ENCODE measurements at regions of chr14 and their contacts with region 1.

Region 1: GRCh38 chr14:102917469-102918211 is 4.8 kb upstream of the AMN start:
- DNase-seq: peak; percentile 79
- ATAC-seq: peak; percentile 28
- H3K4me3 ChIP-seq: peak overlapping the region in 1 of 5 experiments; percentile 16
- H3K4me3 Mint-ChIP-seq: peak overlapping the region; percentile 33
- H3K27ac ChIP-seq: peak overlapping the region; percentile 55 to 68
- H3K27ac Mint-ChIP-seq: peak overlapping the region; percentile 80
- H3K4me1 ChIP-seq: peaks cover 54 to 58% of the 10 kb centered on the region in 2 donors
- H3K4me1 Mint-ChIP-seq: peaks cover 48% of the 10 kb centered on the region
- H3K27me3 ChIP-seq: peaks cover 0 to 4% (median under 1%) of the 10 kb centered on the region in 4 experiments
- H3K27me3 Mint-ChIP-seq: no peaks in the 10 kb centered on the region
- CTCF ChIP-seq: peak; percentile 73

Region 2: DNA sequence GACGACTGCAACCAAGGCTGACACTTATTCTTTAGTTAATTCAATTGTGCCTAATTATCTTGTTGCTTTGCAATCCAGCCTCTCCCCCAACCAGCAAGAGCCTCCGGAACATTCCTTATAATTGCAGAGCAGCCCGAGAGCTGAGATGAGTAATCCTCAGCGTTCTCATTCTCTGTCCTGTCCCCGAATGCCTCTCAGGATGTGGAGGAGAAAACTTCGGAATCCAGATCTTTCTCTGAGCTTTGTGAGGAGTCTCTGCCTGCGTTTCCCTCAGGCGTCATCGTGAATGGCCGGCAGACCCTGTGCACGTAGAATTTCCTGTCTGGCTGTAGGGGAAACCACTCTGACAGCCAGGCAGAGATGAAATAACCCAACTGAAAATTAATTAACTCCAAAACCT is 1516.8 kb before region 1 on chr14:
- CTCF ChIA-PET with region 1: no interaction called
- POLR2A ChIA-PET with region 1: no interaction called
- intact Hi-C with region 1: no loop called
- DNase-seq: no peak
- ATAC-seq: no peak
- H3K4me3 ChIP-seq: no peak overlapping the region
- H3K4me3 Mint-ChIP-seq: no peak overlapping the region
- H3K27ac ChIP-seq: no peak overlapping the region
- H3K27ac Mint-ChIP-seq: no peak overlapping the region
- H3K4me1 ChIP-seq: peaks cover 0 to 14% of the 10 kb centered on the region in 2 donors
- H3K4me1 Mint-ChIP-seq: peaks cover 8% of the 10 kb centered on the region
- H3K27me3 ChIP-seq: peaks cover 0 to 8% (median 0%) of the 10 kb centered on the region in 4 experiments
- H3K27me3 Mint-ChIP-seq: peaks cover 24% of the 10 kb centered on the region
- CTCF ChIP-seq: no peak

Region 3: DNA sequence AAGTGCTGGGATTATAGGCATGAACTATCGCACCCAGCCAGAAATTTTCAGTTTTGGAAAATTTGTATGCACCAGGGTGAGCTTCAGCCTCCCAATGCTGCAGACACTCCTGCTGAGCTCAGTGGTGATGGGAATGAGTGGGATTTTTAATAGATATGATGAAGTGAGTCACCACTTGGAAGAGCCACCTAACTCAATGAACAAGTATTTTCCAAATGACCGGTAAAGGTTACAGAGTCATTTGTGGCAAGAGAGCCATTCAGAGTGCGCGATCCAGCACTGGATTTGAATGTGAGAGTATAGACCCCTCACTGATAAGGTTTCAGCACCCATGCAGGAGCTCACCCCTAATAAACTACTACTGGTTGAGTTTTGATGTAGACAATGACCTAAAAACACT is 1055.5 kb before region 1 on chr14:
- CTCF ChIA-PET with region 1: no interaction called
- POLR2A ChIA-PET with region 1: no interaction called
- intact Hi-C with region 1: no loop called
- DNase-seq: no peak
- ATAC-seq: no peak
- H3K4me3 ChIP-seq: no peak overlapping the region
- H3K4me3 Mint-ChIP-seq: no peak overlapping the region
- H3K27ac ChIP-seq: no peak overlapping the region
- H3K27ac Mint-ChIP-seq: no peak overlapping the region
- H3K4me1 ChIP-seq: peaks cover 0 to 6% of the 10 kb centered on the region in 2 donors
- H3K4me1 Mint-ChIP-seq: peaks cover 10% of the 10 kb centered on the region
- H3K27me3 ChIP-seq: no peaks in the 10 kb centered on the region
- H3K27me3 Mint-ChIP-seq: no peaks in the 10 kb centered on the region
- CTCF ChIP-seq: no peak

Region 4: DNA sequence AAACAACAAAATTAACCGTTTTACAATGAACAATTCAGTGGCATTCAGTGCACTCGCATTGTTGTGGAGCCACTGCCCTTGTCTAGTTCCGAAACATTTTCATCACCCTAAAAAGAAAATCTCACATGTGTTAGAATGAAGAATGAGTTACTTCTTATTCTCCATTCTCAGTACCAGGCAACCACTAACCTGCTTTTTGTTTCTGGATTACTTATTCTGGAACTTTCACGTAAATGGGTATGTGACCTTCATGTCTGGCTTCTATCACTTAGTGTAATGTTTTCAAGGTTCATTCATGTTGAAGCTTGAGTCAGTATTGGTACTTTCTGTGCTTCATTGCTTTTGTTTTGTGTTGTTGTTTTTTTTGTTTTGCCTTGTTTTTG is 309.6 kb before region 1 on chr14:
- CTCF ChIA-PET with region 1: no interaction called
- POLR2A ChIA-PET with region 1: no interaction called
- intact Hi-C with region 1: no loop called
- DNase-seq: no peak
- ATAC-seq: no peak
- H3K4me3 ChIP-seq: no peak overlapping the region
- H3K4me3 Mint-ChIP-seq: peak overlapping the region; percentile 49
- H3K27ac ChIP-seq: no peak overlapping the region
- H3K27ac Mint-ChIP-seq: no peak overlapping the region
- H3K4me1 ChIP-seq: peaks cover 30 to 51% of the 10 kb centered on the region in 2 donors
- H3K4me1 Mint-ChIP-seq: peaks cover 72% of the 10 kb centered on the region
- H3K27me3 ChIP-seq: no peaks in the 10 kb centered on the region
- H3K27me3 Mint-ChIP-seq: no peaks in the 10 kb centered on the region
- CTCF ChIP-seq: no peak

Region 5: GRCh38 chr14:102708494-102708893 is 209.1 kb before region 1 on chr14:
- CTCF ChIA-PET with region 1: no interaction called
- POLR2A ChIA-PET with region 1: no interaction called
- intact Hi-C with region 1: loop called (anchors 5 kb)
- DNase-seq: no peak
- ATAC-seq: no peak
- H3K4me3 ChIP-seq: no peak overlapping the region
- H3K4me3 Mint-ChIP-seq: no peak overlapping the region
- H3K27ac ChIP-seq: no peak overlapping the region
- H3K27ac Mint-ChIP-seq: peak overlapping the region; percentile 72
- H3K4me1 ChIP-seq: no peaks in the 10 kb centered on the region
- H3K4me1 Mint-ChIP-seq: peaks cover 4% of the 10 kb centered on the region
- H3K27me3 ChIP-seq: no peaks in the 10 kb centered on the region
- H3K27me3 Mint-ChIP-seq: no peaks in the 10 kb centered on the region
- CTCF ChIP-seq: no peak

Region 6: GRCh38 chr14:102900631-102901571 is 16.7 kb before region 1 on chr14:
- CTCF ChIA-PET with region 1: interaction called, 12 read pairs
- POLR2A ChIA-PET with region 1: interaction called, 13 read pairs
- intact Hi-C with region 1: loop called (anchors 1 kb)
- DNase-seq: peak; percentile 82
- ATAC-seq: peak; percentile 66
- H3K4me3 ChIP-seq: peak overlapping the region in 4 of 5 experiments; percentile 15 to 45 (median 30)
- H3K4me3 Mint-ChIP-seq: peak overlapping the region; percentile 85
- H3K27ac ChIP-seq: peak overlapping the region; percentile 91 to 93
- H3K27ac Mint-ChIP-seq: peak overlapping the region; percentile 98
- H3K4me1 ChIP-seq: peaks cover 62 to 71% of the 10 kb centered on the region in 2 donors
- H3K4me1 Mint-ChIP-seq: peaks cover 61% of the 10 kb centered on the region
- H3K27me3 ChIP-seq: no peaks in the 10 kb centered on the region
- H3K27me3 Mint-ChIP-seq: no peaks in the 10 kb centered on the region
- CTCF ChIP-seq: no peak

Region 7: GRCh38 chr14:102966681-102967505 is 49.3 kb after region 1 on chr14:
- CTCF ChIA-PET with region 1: no interaction called
- POLR2A ChIA-PET with region 1: no interaction called
- intact Hi-C with region 1: no loop called
- DNase-seq: no peak
- ATAC-seq: no peak
- H3K4me3 ChIP-seq: no peak overlapping the region
- H3K4me3 Mint-ChIP-seq: no peak overlapping the region
- H3K27ac ChIP-seq: no peak overlapping the region
- H3K27ac Mint-ChIP-seq: no peak overlapping the region
- H3K4me1 ChIP-seq: no peaks in the 10 kb centered on the region
- H3K4me1 Mint-ChIP-seq: no peaks in the 10 kb centered on the region
- H3K27me3 ChIP-seq: no peaks in the 10 kb centered on the region
- H3K27me3 Mint-ChIP-seq: no peaks in the 10 kb centered on the region
- CTCF ChIP-seq: no peak